CD4-positive, alpha-beta T cell (primary cell): ENCODE measurements at regions of chr17 and their contacts with region 1.

Region 1: DNA sequence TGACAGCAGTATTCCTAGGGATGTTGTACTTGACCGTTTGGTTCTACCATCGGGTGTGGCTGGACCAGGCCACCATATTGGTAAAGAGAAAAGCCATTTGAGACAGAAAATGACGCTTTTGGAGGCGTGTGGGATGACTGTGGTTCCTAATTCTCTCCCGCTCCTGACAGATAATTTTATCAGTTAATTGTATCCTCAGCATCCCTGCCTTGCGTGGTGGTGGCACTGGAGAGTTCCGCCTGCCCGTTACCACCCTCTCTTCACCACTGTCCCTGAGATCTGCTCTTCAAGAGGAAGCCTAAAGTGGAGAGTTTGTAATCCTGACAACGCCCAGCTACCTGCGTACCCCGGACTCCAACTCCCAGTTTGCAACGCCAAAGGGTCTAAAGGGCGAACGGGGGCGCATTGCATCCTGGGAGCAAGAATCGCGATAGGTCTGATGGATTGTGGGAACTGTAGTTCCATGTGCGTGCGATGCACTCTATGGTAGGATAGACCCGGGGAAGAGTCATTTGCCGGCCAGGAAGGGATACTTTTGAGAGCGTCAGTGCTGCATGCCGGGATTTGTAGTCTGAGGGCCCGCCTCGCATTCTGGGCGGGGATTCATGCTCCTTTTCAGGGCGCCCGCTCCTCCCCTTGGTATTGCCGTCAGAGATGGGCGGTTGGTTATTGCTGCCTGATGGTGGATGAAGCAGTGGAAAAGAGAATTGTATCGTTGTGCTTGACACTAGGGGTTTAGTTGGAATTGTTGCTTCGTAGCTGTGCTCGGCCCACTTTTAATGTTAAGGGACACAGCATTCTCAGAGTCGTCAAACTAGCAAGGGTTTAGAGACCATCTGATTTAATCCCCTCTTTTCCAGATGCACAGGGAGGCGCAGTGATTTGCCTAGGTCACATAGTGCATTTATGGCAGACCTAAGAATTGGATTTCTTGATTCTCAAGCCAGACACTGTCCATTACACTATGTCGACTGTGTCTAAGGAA is 965 bp upstream of the PHF12 start:
- DNase-seq: peak; percentile 89 to 100 (median 94)
- ATAC-seq: peak; percentile 71
- H3K4me3 ChIP-seq: peak overlapping the region; percentile 64
- H3K4me3 Mint-ChIP-seq: no peak overlapping the region
- H3K27ac ChIP-seq: peak overlapping the region; percentile 94 to 97
- H3K27ac Mint-ChIP-seq: no peak overlapping the region
- H3K4me1 ChIP-seq: peaks cover 34% of the 10 kb centered on the region
- H3K4me1 Mint-ChIP-seq: peaks cover 15% of the 10 kb centered on the region
- H3K27me3 ChIP-seq: no peaks in the 10 kb centered on the region
- H3K27me3 Mint-ChIP-seq: no peaks in the 10 kb centered on the region
- CTCF ChIP-seq: no peak

Region 2: DNA sequence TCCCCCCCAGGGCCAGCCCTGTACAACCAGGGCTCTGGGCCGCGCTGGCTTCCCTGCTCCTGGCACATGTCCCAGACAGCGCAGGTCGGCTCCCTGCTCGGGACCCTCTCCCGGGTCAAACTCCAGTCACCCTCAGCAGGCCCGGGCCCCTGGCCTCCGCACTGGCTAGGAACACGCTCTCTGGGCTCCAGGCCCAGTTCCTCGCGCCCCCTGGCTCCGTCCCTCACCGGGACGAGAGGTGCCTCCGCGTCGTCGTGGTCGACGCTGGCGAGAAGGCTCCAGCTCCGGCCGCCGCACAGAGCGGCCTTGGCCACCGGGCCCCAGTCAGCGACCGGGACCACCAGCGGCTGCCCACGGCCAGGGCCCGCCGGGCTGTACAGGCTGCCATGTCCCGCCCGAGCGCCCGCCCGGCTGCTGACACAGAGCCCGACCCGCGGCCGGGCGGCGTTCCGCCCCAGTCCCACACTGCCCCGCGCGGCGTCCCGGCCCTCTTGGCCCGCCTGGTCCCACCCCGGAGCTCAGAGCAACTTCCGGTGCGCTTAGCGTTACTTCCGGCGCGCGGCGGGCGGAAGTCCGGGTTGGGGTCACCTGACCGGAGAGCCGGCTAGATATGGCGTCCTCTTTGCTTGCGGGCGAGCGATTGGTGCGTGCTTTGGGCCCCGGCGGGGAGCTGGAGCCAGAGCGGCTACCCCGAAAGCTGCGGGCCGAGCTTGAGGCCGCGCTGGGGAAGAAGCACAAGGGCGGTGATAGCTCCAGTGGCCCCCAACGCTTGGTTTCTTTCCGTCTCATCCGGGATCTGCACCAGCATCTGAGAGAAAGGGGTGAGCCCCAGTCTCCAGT is 595.0 kb before region 1 on chr17 and contains the start of gene POLDIP2:
- CTCF ChIA-PET with region 1: no interaction called
- POLR2A ChIA-PET with region 1: interaction called, 19 read pairs
- intact Hi-C with region 1: loop called in 1 of 2 experiments (anchors 5 kb)
- DNase-seq: peak; percentile 91 to 97 (median 95)
- ATAC-seq: peak; percentile 98
- H3K4me3 ChIP-seq: peak within 1 kb of the TSS; percentile 75
- H3K4me3 Mint-ChIP-seq: peak within 1 kb of the TSS; percentile 97
- H3K27ac ChIP-seq: peak within 1 kb of the TSS; percentile 80 to 83
- H3K27ac Mint-ChIP-seq: peak within 1 kb of the TSS; percentile 92
- H3K4me1 ChIP-seq: peaks cover 25% of the 10 kb centered on the region
- H3K4me1 Mint-ChIP-seq: peaks cover 35% of the 10 kb centered on the region
- H3K27me3 ChIP-seq: no peaks in the 10 kb centered on the region
- H3K27me3 Mint-ChIP-seq: no peaks in the 10 kb centered on the region
- CTCF ChIP-seq: no peak
- total RNA-seq, gene POLDIP2: 22.1 to 23.9 TPM

Region 3: GRCh38 chr17:28710861-28711722 is 241.2 kb before region 1 on chr17:
- CTCF ChIA-PET with region 1: interaction called, 3 read pairs
- POLR2A ChIA-PET with region 1: interaction called, 20 read pairs
- intact Hi-C with region 1: no loop called
- DNase-seq: peak; percentile 78 to 93 (median 86)
- ATAC-seq: peak; percentile 92
- H3K4me3 ChIP-seq: peak overlapping the region; percentile 72
- H3K4me3 Mint-ChIP-seq: peak overlapping the region; percentile 94
- H3K27ac ChIP-seq: peak overlapping the region; percentile 68 to 73
- H3K27ac Mint-ChIP-seq: peak overlapping the region; percentile 87
- H3K4me1 ChIP-seq: peaks cover 18% of the 10 kb centered on the region
- H3K4me1 Mint-ChIP-seq: peaks cover 20% of the 10 kb centered on the region
- H3K27me3 ChIP-seq: peaks cover 4 to 5% of the 10 kb centered on the region in 2 experiments
- H3K27me3 Mint-ChIP-seq: peaks cover 17% of the 10 kb centered on the region
- CTCF ChIP-seq: no peak

Region 4: DNA sequence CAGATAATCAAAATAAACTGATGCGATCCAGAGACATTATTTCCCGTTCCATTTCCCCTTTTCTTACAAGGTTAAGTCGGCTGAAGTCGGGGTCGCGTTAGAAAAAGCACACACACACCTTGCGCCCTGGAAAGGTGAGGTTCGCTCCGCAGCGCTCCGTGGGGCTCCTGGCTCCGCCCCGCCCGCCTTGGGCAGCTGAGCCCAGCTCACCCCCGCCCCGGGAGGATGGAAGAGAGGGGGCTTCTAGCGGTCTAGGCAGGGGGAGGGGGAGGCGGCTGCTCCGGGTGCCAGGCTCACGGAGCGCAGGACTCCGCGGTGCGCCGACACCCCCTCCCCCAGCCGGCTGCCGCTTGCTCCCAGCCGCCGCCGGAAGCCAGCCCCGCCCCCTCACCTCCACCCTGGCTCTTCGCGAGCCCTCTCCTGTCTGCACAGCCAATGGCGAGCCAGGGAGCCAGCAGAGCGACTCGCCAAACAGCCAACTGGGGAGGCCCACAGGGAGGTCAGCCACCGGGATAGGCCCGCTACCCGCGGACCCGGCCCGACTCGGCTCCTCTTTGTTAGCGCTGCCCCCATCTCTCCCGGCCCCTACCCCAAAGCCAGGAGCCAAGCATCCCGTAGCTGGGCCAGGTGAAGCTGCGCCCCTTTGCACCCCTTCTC is 140.1 kb before region 1 on chr17:
- CTCF ChIA-PET with region 1: no interaction called
- POLR2A ChIA-PET with region 1: interaction called, 6 read pairs
- intact Hi-C with region 1: loop called in 1 of 2 experiments (anchors 2 kb)
- DNase-seq: peak; percentile 91 to 98 (median 95)
- ATAC-seq: peak; percentile 95
- H3K4me3 ChIP-seq: peak overlapping the region; percentile 78
- H3K4me3 Mint-ChIP-seq: peak overlapping the region; percentile 92
- H3K27ac ChIP-seq: peak overlapping the region; percentile 91 to 93
- H3K27ac Mint-ChIP-seq: peak overlapping the region; percentile 90
- H3K4me1 ChIP-seq: peaks cover 15% of the 10 kb centered on the region
- H3K4me1 Mint-ChIP-seq: peaks cover 49% of the 10 kb centered on the region
- H3K27me3 ChIP-seq: no peaks in the 10 kb centered on the region
- H3K27me3 Mint-ChIP-seq: no peaks in the 10 kb centered on the region
- CTCF ChIP-seq: no peak

Region 5: GRCh38 chr17:28902819-28903545 is 49.3 kb before region 1 on chr17 and contains the start of gene DHRS13:
- CTCF ChIA-PET with region 1: interaction called, 56 read pairs
- POLR2A ChIA-PET with region 1: interaction called, 37 read pairs
- intact Hi-C with region 1: loop called (anchors 1 kb)
- DNase-seq: peak; percentile 88 to 99 (median 95)
- ATAC-seq: peak; percentile 88
- H3K4me3 ChIP-seq: peak within 1 kb of the TSS; percentile 79
- H3K4me3 Mint-ChIP-seq: peak within 1 kb of the TSS; percentile 85
- H3K27ac ChIP-seq: peak within 1 kb of the TSS; percentile 71 to 76
- H3K27ac Mint-ChIP-seq: peak within 1 kb of the TSS; percentile 85
- H3K4me1 ChIP-seq: peaks cover 36% of the 10 kb centered on the region
- H3K4me1 Mint-ChIP-seq: peaks cover 35% of the 10 kb centered on the region
- H3K27me3 ChIP-seq: no peaks in the 10 kb centered on the region
- H3K27me3 Mint-ChIP-seq: no peaks in the 10 kb centered on the region
- CTCF ChIP-seq: peak; percentile 93
- total RNA-seq, gene DHRS13: 33.5 to 34.3 TPM

Region 6: GRCh38 chr17:28973425-28973824 is 21.1 kb after region 1 on chr17:
- CTCF ChIA-PET with region 1: no interaction called
- POLR2A ChIA-PET with region 1: no interaction called
- intact Hi-C with region 1: no loop called
- DNase-seq: no peak
- ATAC-seq: no peak
- H3K4me3 ChIP-seq: no peak overlapping the region
- H3K4me3 Mint-ChIP-seq: no peak overlapping the region
- H3K27ac ChIP-seq: no peak overlapping the region
- H3K27ac Mint-ChIP-seq: no peak overlapping the region
- H3K4me1 ChIP-seq: no peaks in the 10 kb centered on the region
- H3K4me1 Mint-ChIP-seq: no peaks in the 10 kb centered on the region
- H3K27me3 ChIP-seq: no peaks in the 10 kb centered on the region
- H3K27me3 Mint-ChIP-seq: no peaks in the 10 kb centered on the region
- CTCF ChIP-seq: no peak

Region 7: GRCh38 chr17:29048440-29049368 is 96.4 kb after region 1 on chr17:
- CTCF ChIA-PET with region 1: no interaction called
- POLR2A ChIA-PET with region 1: no interaction called
- intact Hi-C with region 1: no loop called
- DNase-seq: no peak
- ATAC-seq: no peak
- H3K4me3 ChIP-seq: no peak overlapping the region
- H3K4me3 Mint-ChIP-seq: no peak overlapping the region
- H3K27ac ChIP-seq: no peak overlapping the region
- H3K27ac Mint-ChIP-seq: no peak overlapping the region
- H3K4me1 ChIP-seq: no peaks in the 10 kb centered on the region
- H3K4me1 Mint-ChIP-seq: no peaks in the 10 kb centered on the region
- H3K27me3 ChIP-seq: peaks cover 8 to 14% of the 10 kb centered on the region in 2 experiments
- H3K27me3 Mint-ChIP-seq: peaks cover 30% of the 10 kb centered on the region
- CTCF ChIP-seq: no peak

Region 8: DNA sequence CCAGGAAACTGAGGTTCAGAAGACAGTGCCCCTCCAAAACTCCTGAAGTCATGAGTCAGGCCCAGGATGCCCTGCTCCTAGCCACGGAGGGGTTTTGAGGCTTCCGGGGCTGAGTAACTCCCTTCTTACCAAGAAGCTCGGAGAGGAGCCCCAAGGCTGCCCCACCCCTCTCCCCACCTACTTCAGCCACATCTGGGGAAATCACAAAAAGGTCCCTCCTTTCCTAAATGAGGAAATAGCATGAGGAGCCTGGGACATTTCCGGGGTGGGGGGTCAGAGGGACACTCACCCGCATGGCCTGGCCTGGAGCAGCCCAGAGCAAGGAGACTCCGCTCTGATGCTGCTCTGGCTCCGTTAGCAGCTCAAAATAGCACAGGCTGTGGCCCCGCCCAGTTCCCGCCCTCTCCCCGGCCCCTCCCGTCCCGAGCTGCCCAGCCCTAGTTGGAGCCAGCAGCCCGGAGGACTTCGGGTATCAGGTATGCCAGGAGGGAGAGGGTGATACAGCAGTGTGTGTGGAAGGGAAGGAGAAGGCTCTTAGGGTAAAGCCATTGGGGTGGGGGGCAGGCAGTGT is 187.9 kb after region 1 on chr17:
- CTCF ChIA-PET with region 1: interaction called, 3 read pairs
- POLR2A ChIA-PET with region 1: interaction called, 30 read pairs
- intact Hi-C with region 1: no loop called
- DNase-seq: peak; percentile 57 to 90 (median 78)
- ATAC-seq: peak; percentile 53
- H3K4me3 ChIP-seq: peak overlapping the region; percentile 64
- H3K4me3 Mint-ChIP-seq: peak overlapping the region; percentile 91
- H3K27ac ChIP-seq: peak overlapping the region; percentile 78 to 82
- H3K27ac Mint-ChIP-seq: peak overlapping the region; percentile 96
- H3K4me1 ChIP-seq: peaks cover 80% of the 10 kb centered on the region
- H3K4me1 Mint-ChIP-seq: peaks cover 70% of the 10 kb centered on the region
- H3K27me3 ChIP-seq: no peaks in the 10 kb centered on the region
- H3K27me3 Mint-ChIP-seq: no peaks in the 10 kb centered on the region
- CTCF ChIP-seq: no peak